MCF 10A (cell line): ENCODE measurements at regions of chr11 and their contacts with region 1.

Region 1: GRCh38 chr11:130434521-130435223 is 6.3 kb upstream of the ADAMTS8 start:
- DNase-seq: peak; percentile 84
- H3K4me3 Mint-ChIP-seq: no peak overlapping the region
- H3K27ac Mint-ChIP-seq: no peak overlapping the region
- H3K4me1 Mint-ChIP-seq: peaks cover 12% of the 10 kb centered on the region
- H3K27me3 Mint-ChIP-seq: peaks cover 20% of the 10 kb centered on the region
- CTCF ChIP-seq: peak; percentile 88

Region 2: DNA sequence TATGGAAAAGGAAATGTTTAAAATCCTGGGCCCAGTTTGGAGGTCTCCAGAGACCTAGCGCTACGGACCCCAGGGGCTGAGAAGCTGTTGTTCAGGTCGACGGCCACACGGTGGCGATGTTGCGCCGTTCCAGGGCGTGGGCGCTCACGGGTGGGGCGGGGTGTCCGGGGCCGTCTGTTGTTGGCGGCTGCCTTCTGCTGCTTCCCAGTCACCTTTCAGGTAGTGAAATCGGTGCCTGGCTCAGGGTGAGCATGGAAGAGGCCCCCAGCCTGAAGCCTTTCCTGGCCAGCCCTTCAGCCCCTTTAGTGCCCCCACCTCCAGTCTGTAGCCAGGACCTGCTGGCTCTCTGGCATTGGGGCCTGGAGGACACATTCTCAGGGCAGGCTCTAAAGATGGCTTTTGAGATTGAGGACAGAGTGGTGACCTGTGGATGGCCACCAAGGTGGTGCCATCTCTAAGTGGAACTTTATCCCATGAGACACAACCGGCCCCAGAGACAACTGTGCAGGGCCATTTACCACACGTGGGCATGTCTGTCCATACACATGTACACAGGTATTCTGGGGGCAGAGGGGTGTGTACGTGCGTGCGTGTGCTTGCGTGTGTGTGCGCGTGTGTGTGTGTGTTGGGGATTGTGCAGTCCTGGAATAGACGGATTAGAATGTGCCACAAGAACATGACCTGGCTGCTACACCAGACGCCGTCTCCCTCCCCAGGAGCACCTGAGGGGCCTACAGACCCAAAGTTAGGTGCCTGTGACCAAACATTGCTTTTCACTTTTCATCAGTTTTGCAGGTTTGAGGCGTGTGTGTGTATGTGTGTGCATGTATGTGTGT is 221.3 kb before region 1 on chr11:
- CTCF ChIA-PET with region 1: interaction called, 5 read pairs
- POLR2A ChIA-PET with region 1: no interaction called
- intact Hi-C with region 1: loop called (anchors 1 kb)
- DNase-seq: peak; percentile 55
- H3K4me3 Mint-ChIP-seq: no peak overlapping the region
- H3K27ac Mint-ChIP-seq: no peak overlapping the region
- H3K4me1 Mint-ChIP-seq: no peaks in the 10 kb centered on the region
- H3K27me3 Mint-ChIP-seq: no peaks in the 10 kb centered on the region
- CTCF ChIP-seq: peak; percentile 96

Region 3: GRCh38 chr11:130448416-130449309 is 14.0 kb after region 1 on chr11 and contains the start of gene ADAMTS15:
- CTCF ChIA-PET with region 1: interaction called, 75 read pairs
- POLR2A ChIA-PET with region 1: interaction called, 4 read pairs
- intact Hi-C with region 1: no loop called
- DNase-seq: peak; percentile 89
- H3K4me3 Mint-ChIP-seq: peak within 1 kb of the TSS; percentile 72
- H3K27ac Mint-ChIP-seq: no peak within 1 kb of the TSS
- H3K4me1 Mint-ChIP-seq: no peaks in the 10 kb centered on the region
- H3K27me3 Mint-ChIP-seq: no peaks in the 10 kb centered on the region
- CTCF ChIP-seq: no peak
- total RNA-seq, gene ADAMTS15: 0.54 and 0.70 TPM in 2 replicates

Region 4: GRCh38 chr11:130487924-130488815 is 53.5 kb after region 1 on chr11:
- CTCF ChIA-PET with region 1: no interaction called
- POLR2A ChIA-PET with region 1: no interaction called
- intact Hi-C with region 1: no loop called
- DNase-seq: no peak
- H3K4me3 Mint-ChIP-seq: no peak overlapping the region
- H3K27ac Mint-ChIP-seq: no peak overlapping the region
- H3K4me1 Mint-ChIP-seq: no peaks in the 10 kb centered on the region
- H3K27me3 Mint-ChIP-seq: no peaks in the 10 kb centered on the region
- CTCF ChIP-seq: no peak

Region 5: GRCh38 chr11:130601141-130601540 is 166.5 kb after region 1 on chr11:
- CTCF ChIA-PET with region 1: no interaction called
- POLR2A ChIA-PET with region 1: no interaction called
- intact Hi-C with region 1: no loop called
- DNase-seq: no peak
- H3K4me3 Mint-ChIP-seq: no peak overlapping the region
- H3K27ac Mint-ChIP-seq: no peak overlapping the region
- H3K4me1 Mint-ChIP-seq: no peaks in the 10 kb centered on the region
- H3K27me3 Mint-ChIP-seq: no peaks in the 10 kb centered on the region
- CTCF ChIP-seq: no peak

Region 6: GRCh38 chr11:130827451-130828377 is 393.0 kb after region 1 on chr11:
- CTCF ChIA-PET with region 1: interaction called, 250 read pairs
- POLR2A ChIA-PET with region 1: interaction called, 3 read pairs
- intact Hi-C with region 1: loop called (anchors 1 kb)
- DNase-seq: peak; percentile 72
- H3K4me3 Mint-ChIP-seq: no peak overlapping the region
- H3K27ac Mint-ChIP-seq: no peak overlapping the region
- H3K4me1 Mint-ChIP-seq: no peaks in the 10 kb centered on the region
- H3K27me3 Mint-ChIP-seq: no peaks in the 10 kb centered on the region
- CTCF ChIP-seq: peak; percentile 71

Region 7: DNA sequence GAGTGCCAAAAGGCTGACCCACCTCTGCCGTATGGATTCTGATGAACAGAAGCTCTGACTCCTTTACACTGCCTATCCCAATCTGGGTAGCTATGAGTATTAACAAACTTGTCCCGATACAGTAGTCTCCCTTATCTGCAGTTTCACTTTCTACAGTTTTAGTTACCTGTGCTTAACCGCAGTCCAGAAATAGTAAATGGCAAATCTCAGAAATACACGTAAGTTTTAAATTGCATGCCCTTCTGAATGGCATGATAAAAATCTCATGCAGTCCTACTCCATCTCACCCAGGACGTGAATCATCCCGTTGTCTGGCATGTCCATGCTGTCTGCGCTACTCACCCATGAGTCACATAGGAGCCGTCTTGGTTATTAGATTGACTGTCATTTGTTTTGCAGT is 412.8 kb after region 1 on chr11:
- CTCF ChIA-PET with region 1: interaction called, 1,064 read pairs
- POLR2A ChIA-PET with region 1: interaction called, 4 read pairs
- intact Hi-C with region 1: loop called (anchors 5 kb)
- DNase-seq: peak; percentile 92
- H3K4me3 Mint-ChIP-seq: peak overlapping the region; percentile 57
- H3K27ac Mint-ChIP-seq: peak overlapping the region; percentile 55
- H3K4me1 Mint-ChIP-seq: peaks cover 18% of the 10 kb centered on the region
- H3K27me3 Mint-ChIP-seq: no peaks in the 10 kb centered on the region
- CTCF ChIP-seq: no peak

Region 8: DNA sequence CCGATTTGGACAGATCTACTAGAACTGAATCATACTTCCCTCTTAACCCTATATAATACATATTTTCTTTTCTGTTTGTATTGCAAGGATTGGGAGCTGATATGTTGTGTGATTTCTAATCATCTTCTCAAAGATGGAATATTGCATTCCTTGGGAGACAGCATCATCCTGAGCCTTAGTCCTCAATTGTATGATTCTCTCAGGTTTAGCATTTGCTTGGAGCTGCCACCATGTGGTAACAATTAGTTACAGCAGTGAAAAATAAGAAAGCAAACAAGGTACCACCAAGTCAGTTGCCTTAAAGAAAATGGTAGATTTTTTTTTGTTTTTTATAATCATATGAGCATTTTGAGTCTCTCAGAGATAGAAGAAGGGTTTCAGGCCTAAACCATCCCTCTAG is 469.7 kb after region 1 on chr11:
- CTCF ChIA-PET with region 1: interaction called, 132 read pairs
- POLR2A ChIA-PET with region 1: no interaction called
- intact Hi-C with region 1: no loop called
- DNase-seq: peak; percentile 25
- H3K4me3 Mint-ChIP-seq: no peak overlapping the region
- H3K27ac Mint-ChIP-seq: no peak overlapping the region
- H3K4me1 Mint-ChIP-seq: peaks cover 13% of the 10 kb centered on the region
- H3K27me3 Mint-ChIP-seq: no peaks in the 10 kb centered on the region
- CTCF ChIP-seq: no peak